Ovary (tissue), 10 donors: ENCODE measurements at regions of chr1 and their contacts with region 1.

Region 1: DNA sequence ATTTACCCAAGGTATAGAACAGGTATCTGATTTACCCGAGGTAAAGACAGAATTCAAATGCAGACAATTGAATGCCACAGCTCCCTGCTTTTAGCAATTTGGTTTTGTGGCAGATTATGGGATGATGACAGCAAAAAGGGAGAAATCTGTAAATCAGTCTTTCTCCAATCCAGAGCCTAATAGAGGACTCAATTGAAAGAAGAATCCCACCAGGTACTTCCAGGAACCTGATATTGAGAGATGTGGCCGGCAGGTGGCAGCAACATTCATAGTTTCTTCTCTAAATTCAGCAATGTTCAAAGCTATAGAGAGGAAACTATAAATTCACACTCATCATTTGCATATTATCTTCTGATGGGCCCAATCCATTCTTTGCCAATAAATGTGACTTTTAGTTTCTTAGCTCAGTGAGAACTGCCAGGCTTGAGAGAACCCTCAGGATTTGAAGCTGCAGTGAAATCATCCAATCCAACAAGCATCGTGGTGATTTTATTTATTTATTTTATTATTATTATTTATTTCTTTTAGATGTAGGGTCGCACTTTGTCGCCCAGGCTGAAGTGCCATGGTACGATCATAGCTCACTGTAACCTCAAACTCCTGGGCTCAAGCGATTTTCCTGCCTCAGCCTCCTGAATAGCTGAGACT is 9.8 kb upstream of the PHACTR4 start:
- DNase-seq: peak; percentile 58 to 84 (median 78)
- H3K4me3 ChIP-seq: no peak overlapping the region
- H3K27ac ChIP-seq: no peak overlapping the region
- H3K4me1 ChIP-seq: no peaks in the 10 kb centered on the region
- H3K27me3 ChIP-seq: no peaks in the 10 kb centered on the region
- CTCF ChIP-seq: peak; percentile 37 to 55 (median 40)
- EP300 ChIP-seq: no peak
- POLR2A ChIP-seq: no peak

Region 2: DNA sequence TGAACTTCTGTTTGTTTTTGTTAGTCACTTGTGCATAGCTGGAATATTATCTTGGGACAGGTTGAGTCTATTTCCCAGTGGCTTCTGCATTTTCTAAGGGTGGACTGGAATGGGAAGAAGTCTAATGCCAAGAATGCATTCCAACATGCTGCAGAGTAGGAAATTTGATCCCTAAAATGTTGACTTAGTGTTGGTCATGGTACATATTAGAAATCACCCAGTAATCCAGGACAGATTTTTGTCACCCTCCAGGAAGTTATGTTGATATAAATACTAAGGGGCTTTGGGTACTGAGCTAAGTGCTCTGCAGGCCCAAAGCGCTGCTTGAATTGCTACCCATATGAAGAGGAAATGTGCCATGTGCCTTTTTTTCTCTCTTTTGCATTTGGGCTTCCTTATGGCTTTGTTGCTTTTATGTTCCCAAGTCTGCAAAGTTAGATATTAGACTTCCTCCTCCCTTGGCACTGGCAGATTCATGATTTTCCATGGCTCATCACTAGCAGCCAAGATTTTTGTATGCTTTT is 1653.9 kb before region 1 on chr1:
- intact Hi-C with region 1: no loop called
- DNase-seq: no peak
- H3K4me3 ChIP-seq: no peak overlapping the region
- H3K27ac ChIP-seq: peak overlapping the region in 1 of 2 donors; percentile 33
- H3K4me1 ChIP-seq: peaks cover 39% of the 10 kb centered on the region
- H3K27me3 ChIP-seq: no peaks in the 10 kb centered on the region
- CTCF ChIP-seq: no peak
- EP300 ChIP-seq: no peak
- POLR2A ChIP-seq: no peak

Region 3: DNA sequence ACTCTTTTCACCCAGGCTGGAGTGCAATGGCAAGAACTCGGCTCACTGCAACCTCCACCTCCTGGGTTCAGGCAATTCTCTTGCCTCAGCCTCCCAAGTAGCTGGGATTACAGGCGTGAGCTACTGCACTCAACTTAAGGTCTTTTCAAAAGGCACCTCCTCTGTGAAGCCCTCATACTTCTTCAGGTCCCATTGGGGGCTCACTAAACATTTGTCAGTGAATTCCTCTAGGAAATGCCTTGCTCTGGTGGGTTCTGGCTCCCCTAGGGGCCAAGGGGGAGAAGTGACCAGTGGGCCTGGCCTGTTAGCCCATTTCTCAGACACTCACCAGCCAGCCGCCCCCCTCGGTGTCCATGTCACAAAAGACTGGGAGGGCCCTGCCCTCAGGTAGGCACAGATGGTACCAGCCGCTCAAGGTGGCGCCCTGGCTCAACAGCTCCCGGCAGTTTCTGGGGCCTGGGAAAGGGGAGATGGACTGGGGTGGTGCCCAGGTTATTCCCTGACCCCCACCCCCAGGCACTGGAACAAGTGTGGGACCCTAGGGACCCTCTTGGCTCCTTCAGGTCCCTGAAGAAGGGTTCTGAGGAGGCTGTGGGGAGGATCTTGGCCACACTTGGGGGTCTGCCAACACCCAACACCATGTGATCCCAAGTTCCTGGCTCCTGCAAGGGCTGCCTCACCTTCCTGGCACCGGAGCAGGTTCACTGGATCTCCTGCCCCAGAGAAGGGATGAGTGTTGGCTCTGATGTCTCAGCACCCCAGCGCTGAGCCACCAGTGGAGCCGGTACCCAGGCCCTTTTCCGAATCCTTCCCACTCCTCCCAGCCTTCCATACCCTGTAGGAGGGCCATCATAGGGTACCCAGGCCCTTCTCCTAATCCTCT is 986.7 kb before region 1 on chr1:
- intact Hi-C with region 1: no loop called
- DNase-seq: no peak
- H3K4me3 ChIP-seq: no peak overlapping the region
- H3K27ac ChIP-seq: no peak overlapping the region
- H3K4me1 ChIP-seq: no peaks in the 10 kb centered on the region
- H3K27me3 ChIP-seq: no peaks in the 10 kb centered on the region
- CTCF ChIP-seq: no peak
- EP300 ChIP-seq: no peak
- POLR2A ChIP-seq: no peak

Region 4: DNA sequence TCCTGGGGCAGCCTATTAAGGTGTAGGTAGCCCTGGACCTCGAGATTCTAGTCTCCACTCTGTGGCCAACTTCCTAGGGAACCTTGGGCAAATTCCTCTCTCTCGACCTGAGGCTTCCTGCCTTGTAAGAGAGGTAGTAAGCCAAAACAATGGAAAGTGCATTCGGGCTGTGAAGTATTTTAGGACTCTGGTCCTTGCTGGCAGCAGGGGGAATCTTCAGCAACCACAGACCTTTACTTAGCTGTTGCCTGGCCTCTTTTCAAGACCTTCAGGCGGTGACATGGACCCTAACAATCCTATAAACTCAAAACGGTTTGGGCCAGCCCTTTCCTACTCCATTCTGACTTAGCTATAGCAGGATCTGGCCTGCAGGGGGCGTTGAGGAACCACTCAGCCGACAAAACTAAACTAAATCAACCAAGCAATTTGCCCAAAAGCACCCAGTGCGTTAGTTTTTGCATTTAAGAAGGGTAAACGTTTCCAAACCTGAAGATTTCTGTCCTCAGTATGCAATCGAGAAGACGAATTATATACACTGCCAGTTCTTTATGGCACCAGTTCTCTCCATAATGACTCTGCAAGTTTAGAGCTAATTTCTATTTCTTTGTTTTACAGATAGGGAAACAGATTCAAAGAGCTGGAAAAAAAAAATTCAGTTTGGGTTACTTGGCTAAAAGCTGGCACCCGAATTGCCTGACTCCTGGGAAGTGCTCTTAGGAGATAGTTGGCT is 111.3 kb before region 1 on chr1:
- intact Hi-C with region 1: loop called in 2 of 4 experiments (anchors 5 to 10 kb)
- DNase-seq: peak; percentile 72 to 87 (median 82)
- H3K4me3 ChIP-seq: no peak overlapping the region
- H3K27ac ChIP-seq: peak overlapping the region; percentile 61 to 62
- H3K4me1 ChIP-seq: peaks cover 3% of the 10 kb centered on the region
- H3K27me3 ChIP-seq: no peaks in the 10 kb centered on the region
- CTCF ChIP-seq: peak; percentile 80 to 93 (median 87)
- EP300 ChIP-seq: no peak
- POLR2A ChIP-seq: no peak